ENCODE measurements at regions of chr17 and their contacts with region 1.

Region 1: GRCh38 chr17:77186141-77186604 is 45.4 kb downstream of the SEC14L1 start:
- DNase-seq: peak; percentile 34
- H3K4me3 ChIP-seq: no peak overlapping the region
- H3K27ac ChIP-seq: no peak overlapping the region
- H3K4me1 ChIP-seq: peaks cover 82% of the 10 kb centered on the region
- CTCF ChIP-seq: no peak

Region 2: DNA sequence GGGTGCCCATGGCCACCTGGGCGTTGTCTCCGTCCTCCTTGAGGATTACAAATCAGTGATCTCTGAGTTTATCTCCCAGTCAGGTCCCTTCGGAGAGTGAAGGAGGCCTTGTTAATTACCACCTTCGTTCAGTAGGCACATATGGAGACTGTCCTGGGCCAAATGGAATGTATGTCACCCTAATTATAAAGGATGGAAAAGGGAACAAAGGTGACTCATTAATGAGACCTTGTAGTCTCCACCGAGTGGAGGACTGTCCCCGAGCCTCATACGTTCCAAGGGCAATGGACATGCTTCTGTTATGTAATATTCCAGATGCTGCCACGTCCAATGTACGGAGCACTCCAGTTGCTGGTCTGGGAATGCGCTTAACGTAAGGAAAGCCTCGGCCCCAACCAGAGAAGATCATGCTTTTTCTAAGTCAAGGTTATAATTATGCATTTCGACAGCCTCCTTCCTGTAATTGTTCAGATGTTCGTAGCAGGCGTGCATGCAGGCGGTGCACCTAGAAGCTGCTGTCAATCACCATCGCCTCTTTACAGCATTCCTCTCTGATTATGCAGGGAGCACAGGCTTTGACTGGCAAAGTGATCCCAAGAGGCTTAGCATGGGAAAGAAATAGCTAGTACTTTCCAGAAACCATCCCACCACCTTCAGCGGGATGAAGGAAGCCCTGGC is 67.8 kb before region 1 on chr17:
- CTCF ChIA-PET with region 1: no interaction called
- POLR2A ChIA-PET with region 1: no interaction called
- intact Hi-C with region 1: loop called (anchors 2 kb)
- DNase-seq: no peak
- H3K4me3 ChIP-seq: no peak overlapping the region
- H3K27ac ChIP-seq: no peak overlapping the region
- H3K4me1 ChIP-seq: no peaks in the 10 kb centered on the region
- CTCF ChIP-seq: no peak

Region 3: DNA sequence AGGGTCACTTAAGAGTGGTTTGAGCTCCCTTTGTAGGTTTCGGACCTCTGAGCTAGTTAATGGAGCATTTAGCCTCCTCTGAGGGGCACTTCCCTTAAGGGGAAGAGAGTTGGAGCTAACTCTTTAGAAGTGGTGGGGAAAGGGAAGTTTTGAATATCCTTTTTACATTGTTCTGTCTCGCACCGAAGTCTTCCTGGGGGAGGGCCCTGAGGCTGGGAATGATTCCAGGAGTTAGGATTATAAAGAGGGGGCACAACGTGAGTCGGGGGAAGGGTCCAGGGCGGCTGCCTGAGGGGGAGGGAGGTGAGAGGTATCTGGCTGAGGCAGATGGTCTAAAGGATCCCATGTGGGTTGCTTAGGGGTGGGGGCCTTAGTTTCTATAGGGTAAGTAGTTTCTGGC is 13.1 kb before region 1 on chr17:
- CTCF ChIA-PET with region 1: no interaction called
- POLR2A ChIA-PET with region 1: interaction called, 13 read pairs
- intact Hi-C with region 1: no loop called
- DNase-seq: no peak
- H3K4me3 ChIP-seq: no peak overlapping the region
- H3K27ac ChIP-seq: no peak overlapping the region
- H3K4me1 ChIP-seq: peaks cover 7% of the 10 kb centered on the region
- CTCF ChIP-seq: no peak

Measured in OCI-LY7 (cell line).